CD4-positive, alpha-beta memory T cell (primary cell): ENCODE measurements at regions of chr21 and their contacts with region 1.

Region 1: GRCh38 chr21:17387030-17387617 is 125.7 kb upstream of the CXADR start:
- DNase-seq: peak in 4 of 5 donors; percentile 48 to 63 (median 60)
- H3K4me3 ChIP-seq: no peak overlapping the region
- H3K4me3 Mint-ChIP-seq: no peak overlapping the region
- H3K27ac ChIP-seq: no peak overlapping the region
- H3K27ac Mint-ChIP-seq: no peak overlapping the region
- H3K4me1 ChIP-seq: no peaks in the 10 kb centered on the region
- H3K4me1 Mint-ChIP-seq: no peaks in the 10 kb centered on the region
- H3K27me3 ChIP-seq: no peaks in the 10 kb centered on the region
- H3K27me3 Mint-ChIP-seq: peaks cover 2 to 5% of the 10 kb centered on the region in 2 donors

Region 2: DNA sequence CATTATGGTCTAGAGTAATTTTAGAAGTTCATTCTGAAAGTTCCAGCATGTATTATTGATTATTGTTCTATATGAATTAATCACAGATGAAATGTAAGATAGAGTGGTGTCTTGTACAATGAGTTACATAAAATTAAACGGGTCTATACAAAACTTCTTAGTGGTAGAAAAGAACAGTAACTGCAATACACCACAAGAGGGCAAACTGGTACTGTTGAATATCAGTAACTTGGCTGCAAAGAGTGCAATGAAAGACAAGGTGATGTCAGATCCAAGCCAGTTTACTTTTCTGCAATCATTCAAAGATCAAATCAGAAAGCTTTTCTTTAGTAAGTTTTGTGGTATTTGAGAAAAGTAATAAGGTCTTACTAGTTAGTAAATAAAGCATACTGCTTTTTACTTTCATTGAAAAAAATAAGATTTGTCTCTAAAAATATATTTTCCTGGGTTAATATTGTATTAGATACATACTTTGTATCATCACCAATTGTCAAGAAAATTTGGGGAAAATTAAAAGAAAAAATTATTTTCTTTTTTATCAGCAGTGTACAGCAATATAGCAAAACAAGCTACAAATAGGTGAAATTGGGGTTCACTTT is 292.0 kb after region 1 on chr21:
- CTCF ChIA-PET with region 1: no interaction called
- POLR2A ChIA-PET with region 1: no interaction called
- intact Hi-C with region 1: loop called (anchors 5 kb)
- DNase-seq: peak; percentile 40 to 70 (median 66)
- H3K4me3 ChIP-seq: no peak overlapping the region
- H3K4me3 Mint-ChIP-seq: no peak overlapping the region
- H3K27ac ChIP-seq: no peak overlapping the region
- H3K27ac Mint-ChIP-seq: no peak overlapping the region
- H3K4me1 ChIP-seq: no peaks in the 10 kb centered on the region
- H3K4me1 Mint-ChIP-seq: no peaks in the 10 kb centered on the region
- H3K27me3 ChIP-seq: no peaks in the 10 kb centered on the region
- H3K27me3 Mint-ChIP-seq: no peaks in the 10 kb centered on the region

Region 3: DNA sequence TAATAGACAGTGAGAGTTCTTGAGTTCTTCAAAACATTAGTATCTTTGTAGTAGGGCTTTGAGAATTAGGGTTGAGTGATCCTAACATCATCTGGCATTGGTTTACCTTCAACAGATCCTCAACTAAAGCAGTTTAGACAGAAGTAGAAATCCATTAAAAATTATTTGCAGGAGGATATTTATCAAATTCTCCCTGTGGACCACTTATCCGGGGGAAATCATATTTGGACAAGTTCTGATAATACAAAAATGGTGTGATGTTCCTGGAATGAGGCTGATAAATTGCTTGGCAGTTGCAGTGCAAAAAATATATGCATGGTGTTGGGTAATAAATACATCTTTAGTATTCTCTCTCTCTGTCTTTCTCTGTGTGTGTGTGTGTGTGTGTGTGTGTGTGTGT is 742.4 kb after region 1 on chr21:
- CTCF ChIA-PET with region 1: no interaction called
- POLR2A ChIA-PET with region 1: no interaction called
- intact Hi-C with region 1: no loop called
- DNase-seq: no peak
- H3K4me3 ChIP-seq: no peak overlapping the region
- H3K4me3 Mint-ChIP-seq: no peak overlapping the region
- H3K27ac ChIP-seq: no peak overlapping the region
- H3K27ac Mint-ChIP-seq: no peak overlapping the region
- H3K4me1 ChIP-seq: no peaks in the 10 kb centered on the region
- H3K4me1 Mint-ChIP-seq: no peaks in the 10 kb centered on the region
- H3K27me3 ChIP-seq: no peaks in the 10 kb centered on the region
- H3K27me3 Mint-ChIP-seq: no peaks in the 10 kb centered on the region